A549 (cell line): ENCODE measurements at regions of chr1 and their contacts with region 1.

Region 1: DNA sequence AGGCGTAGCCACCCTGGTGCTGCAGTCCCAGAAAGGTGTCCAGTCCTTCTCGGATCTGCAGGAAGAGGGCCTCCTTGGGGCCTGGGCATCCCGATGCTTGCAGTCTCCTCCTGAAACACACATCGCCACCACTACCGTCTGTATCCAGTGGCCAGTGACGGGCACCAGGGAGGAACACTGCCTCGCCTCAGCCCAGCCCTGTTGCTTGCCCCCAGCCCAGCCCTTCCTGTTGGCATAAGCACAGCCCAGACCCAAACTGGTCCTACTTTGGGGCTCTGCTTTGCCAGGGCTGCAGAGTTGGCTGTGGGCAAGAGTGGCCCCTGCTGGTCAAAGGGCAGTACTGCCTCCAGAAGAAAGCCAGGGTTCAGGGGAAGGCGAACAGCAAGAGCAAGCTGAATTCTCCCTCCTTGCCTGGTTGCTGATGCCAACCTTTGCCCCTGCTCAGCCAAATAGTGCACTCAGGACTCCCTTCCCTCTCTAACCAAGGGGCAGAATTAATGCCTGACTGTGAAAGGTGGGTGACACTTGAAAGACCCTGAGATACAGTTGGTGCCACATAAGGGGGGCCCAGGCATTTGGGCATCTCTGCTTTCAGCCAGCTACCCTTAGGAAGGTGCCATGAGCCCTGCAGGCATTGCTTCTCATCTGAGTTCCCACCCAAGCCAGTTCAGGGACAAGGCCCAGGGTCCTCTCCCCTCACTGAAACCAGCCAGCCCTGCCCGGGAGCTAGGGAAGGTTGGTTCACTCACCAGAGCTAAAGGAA is 11.1 kb upstream of the ARHGEF2 start:
- DNase-seq: peak in 1 of 2 experiments; percentile 71
- ATAC-seq: peak; percentile 90 to 96
- H3K4me3 ChIP-seq: no peak overlapping the region
- H3K27ac ChIP-seq: peak overlapping the region; percentile 66 to 77
- H3K4me1 ChIP-seq: peaks cover 9% of the 10 kb centered on the region
- CTCF ChIP-seq: peak; percentile 96
- EP300 ChIP-seq: no peak
- POLR2A ChIP-seq: no peak
- RAD21 ChIP-seq: peak; percentile 98 to 99

Region 2: GRCh38 chr1:155859234-155859829 is 130.1 kb before region 1 on chr1 and contains the start of gene SYT11:
- CTCF ChIA-PET with region 1: interaction called, 14 read pairs
- POLR2A ChIA-PET with region 1: no interaction called
- DNase-seq: peak; percentile 91 to 94
- ATAC-seq: peak; percentile 78 to 89
- H3K4me3 ChIP-seq: peak within 1 kb of the TSS; percentile 49
- H3K27ac ChIP-seq: peak within 1 kb of the TSS; percentile 67 to 90
- H3K4me1 ChIP-seq: peaks cover 16% of the 10 kb centered on the region
- CTCF ChIP-seq: no peak
- EP300 ChIP-seq: no peak
- POLR2A ChIP-seq: no peak
- RAD21 ChIP-seq: no peak
- polyA plus RNA-seq, gene SYT11: 2.5 and 2.6 TPM in 2 replicates

Region 3: GRCh38 chr1:155951753-155952504 is 37.5 kb before region 1 on chr1:
- CTCF ChIA-PET with region 1: interaction called, 40 read pairs
- POLR2A ChIA-PET with region 1: no interaction called
- DNase-seq: no peak
- ATAC-seq: no peak
- H3K4me3 ChIP-seq: no peak overlapping the region
- H3K27ac ChIP-seq: no peak overlapping the region
- H3K4me1 ChIP-seq: peaks cover 5% of the 10 kb centered on the region; the same call in 2 of the 3 replicates
- CTCF ChIP-seq: no peak
- EP300 ChIP-seq: no peak
- POLR2A ChIP-seq: no peak
- RAD21 ChIP-seq: no peak

Region 4: GRCh38 chr1:155970531-155971167 is 18.8 kb before region 1 on chr1:
- CTCF ChIA-PET with region 1: interaction called, 75 read pairs
- POLR2A ChIA-PET with region 1: interaction called, 3 read pairs
- DNase-seq: no peak
- ATAC-seq: peak; percentile 48 to 67; a peak in 5 of 6 replicates
- H3K4me3 ChIP-seq: no peak overlapping the region
- H3K27ac ChIP-seq: peak overlapping the region; percentile 44 to 55; a peak in 4 of 6 replicates
- H3K4me1 ChIP-seq: peaks cover 76% of the 10 kb centered on the region
- CTCF ChIP-seq: no peak
- EP300 ChIP-seq: no peak
- POLR2A ChIP-seq: no peak
- RAD21 ChIP-seq: no peak

Region 5: GRCh38 chr1:156001682-156002171 is 12.3 kb after region 1 on chr1:
- CTCF ChIA-PET with region 1: interaction called, 63 read pairs
- POLR2A ChIA-PET with region 1: no interaction called
- DNase-seq: no peak
- ATAC-seq: peak; percentile 14 to 36; a peak in 3 of 6 replicates
- H3K4me3 ChIP-seq: 0 out of 3 replicates have a peak overlapping the region, but pooled peaks have one; percentile 17
- H3K27ac ChIP-seq: peak overlapping the region; percentile 68 to 85
- H3K4me1 ChIP-seq: peaks cover 39% of the 10 kb centered on the region
- CTCF ChIP-seq: no peak
- EP300 ChIP-seq: no peak
- POLR2A ChIP-seq: no peak
- RAD21 ChIP-seq: peak; percentile 25 to 35; a peak in 2 of 5 replicates